ENCODE measurements at regions of chr13 and their contacts with region 1.

Region 1: GRCh38 chr13:76991796-76992547 is at the start of gene CLN5:
- DNase-seq: peak; percentile 95
- H3K4me3 Mint-ChIP-seq: peak within 1 kb of the TSS; percentile 95
- H3K27ac Mint-ChIP-seq: peak within 1 kb of the TSS; percentile 97
- H3K4me1 Mint-ChIP-seq: peaks cover 39% of the 10 kb centered on the region
- H3K27me3 Mint-ChIP-seq: no peaks in the 10 kb centered on the region
- total RNA-seq, gene CLN5: 13.6 to 14.6 TPM

Region 2: GRCh38 chr13:76822698-76823267 is 169.2 kb before region 1 on chr13:
- CTCF ChIA-PET with region 1: no interaction called
- intact Hi-C with region 1: no loop called
- DNase-seq: peak; percentile 19
- H3K4me3 Mint-ChIP-seq: no peak overlapping the region
- H3K27ac Mint-ChIP-seq: no peak overlapping the region
- H3K4me1 Mint-ChIP-seq: peaks cover 2% of the 10 kb centered on the region
- H3K27me3 Mint-ChIP-seq: no peaks in the 10 kb centered on the region

Region 3: DNA sequence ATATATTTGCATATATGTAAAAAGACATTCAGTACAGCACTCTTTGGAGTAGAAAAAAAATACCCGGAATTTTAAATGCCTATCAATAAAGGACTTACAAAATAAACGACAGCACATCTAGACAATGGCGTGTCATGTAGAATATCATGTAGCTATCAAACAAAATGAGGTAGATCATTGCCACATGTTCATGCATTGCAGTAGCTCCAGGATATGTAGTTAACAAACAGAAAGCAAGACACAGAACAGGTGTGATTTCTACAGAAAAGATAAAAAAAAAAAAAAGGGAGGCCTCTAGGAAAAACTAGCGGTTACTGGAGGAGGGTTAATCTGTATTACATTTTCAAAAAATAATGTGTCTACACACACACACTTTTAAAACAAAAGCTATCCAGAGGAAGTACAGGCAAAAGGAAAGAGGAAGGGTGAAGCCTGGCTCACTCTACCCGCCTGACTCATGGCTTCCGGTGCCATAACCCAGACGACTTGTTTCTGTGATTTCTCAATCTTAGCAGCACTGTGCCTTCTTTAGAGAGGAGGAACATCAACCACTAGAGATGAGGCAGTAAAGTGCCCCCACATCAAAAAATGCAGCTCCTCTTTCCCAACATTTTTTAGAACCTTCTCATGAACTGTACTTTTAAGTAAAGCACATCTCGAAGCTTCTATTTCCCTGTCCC is 112.6 kb before region 1 on chr13:
- CTCF ChIA-PET with region 1: no interaction called
- intact Hi-C with region 1: loop called (anchors 1 kb)
- DNase-seq: peak; percentile 86
- H3K4me3 Mint-ChIP-seq: peak overlapping the region; percentile 63
- H3K27ac Mint-ChIP-seq: peak overlapping the region; percentile 85
- H3K4me1 Mint-ChIP-seq: peaks cover 39% of the 10 kb centered on the region
- H3K27me3 Mint-ChIP-seq: no peaks in the 10 kb centered on the region

Region 4: GRCh38 chr13:77002590-77003190 is 10.7 kb after region 1 on chr13:
- CTCF ChIA-PET with region 1: interaction called, 10 read pairs
- intact Hi-C with region 1: loop called (anchors 1 kb)
- DNase-seq: no peak
- H3K4me3 Mint-ChIP-seq: no peak overlapping the region
- H3K27ac Mint-ChIP-seq: peak overlapping the region; percentile 0
- H3K4me1 Mint-ChIP-seq: peaks cover 40% of the 10 kb centered on the region
- H3K27me3 Mint-ChIP-seq: no peaks in the 10 kb centered on the region

Region 5: DNA sequence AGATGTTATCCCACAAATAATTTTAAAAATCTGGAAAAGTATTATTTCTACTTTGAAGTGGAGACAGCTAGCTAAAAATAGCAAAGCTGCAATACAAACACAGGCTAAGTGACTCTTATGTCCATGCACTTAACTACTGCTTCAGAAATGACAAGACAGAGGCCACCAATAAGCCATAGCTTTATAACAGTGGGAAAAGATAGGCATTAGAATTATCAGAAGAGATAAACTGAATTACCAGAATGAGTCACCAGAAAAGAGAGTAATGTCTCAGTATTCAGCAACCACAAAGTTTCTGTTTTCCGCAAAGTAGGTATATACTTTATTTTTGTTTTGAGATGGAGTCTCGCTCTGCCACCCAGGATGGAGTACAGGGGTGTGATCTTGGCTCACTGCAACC is 17.0 kb after region 1 on chr13:
- CTCF ChIA-PET with region 1: interaction called, 5 read pairs
- intact Hi-C with region 1: loop called (anchors 1 kb)
- DNase-seq: peak; percentile 16
- H3K4me3 Mint-ChIP-seq: no peak overlapping the region
- H3K27ac Mint-ChIP-seq: peak overlapping the region; percentile 61
- H3K4me1 Mint-ChIP-seq: peaks cover 43% of the 10 kb centered on the region
- H3K27me3 Mint-ChIP-seq: no peaks in the 10 kb centered on the region

Region 6: DNA sequence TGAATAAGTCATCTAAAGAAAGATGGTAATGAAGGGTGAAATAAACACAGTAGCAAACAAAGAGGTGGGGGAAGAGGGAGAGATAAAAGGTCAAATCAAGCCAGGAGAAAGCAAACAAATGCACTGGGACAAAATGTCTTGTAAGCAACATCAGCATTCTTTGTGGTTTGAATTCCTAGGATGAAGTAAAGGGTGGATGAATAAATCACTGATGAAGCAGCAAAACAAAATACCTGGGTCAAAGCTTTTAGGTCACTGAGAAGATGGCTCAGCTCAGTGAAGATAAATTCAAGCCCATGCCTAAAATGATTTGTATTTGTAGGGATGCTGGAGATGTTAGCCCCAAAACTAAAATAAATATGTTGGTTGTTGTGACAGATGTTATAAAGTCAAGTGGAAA is 121.5 kb after region 1 on chr13:
- CTCF ChIA-PET with region 1: no interaction called
- intact Hi-C with region 1: no loop called
- DNase-seq: no peak
- H3K4me3 Mint-ChIP-seq: no peak overlapping the region
- H3K27ac Mint-ChIP-seq: no peak overlapping the region
- H3K4me1 Mint-ChIP-seq: no peaks in the 10 kb centered on the region
- H3K27me3 Mint-ChIP-seq: no peaks in the 10 kb centered on the region

Measured in activated naive CD4-positive, alpha-beta T cell treated with anti-CD3 and anti-CD28 coated beads for 36 hours (primary cell).